GM12878 (cell line): ENCODE measurements at regions of chr2 and their contacts with region 1.

Region 1: GRCh38 chr2:45993476-45993991 is 303.7 kb upstream of the EPAS1 start:
- DNase-seq: peak; percentile 23
- ATAC-seq: peak; percentile 90
- H3K4me3 ChIP-seq: no peak overlapping the region
- H3K27ac ChIP-seq: no peak overlapping the region
- H3K4me1 ChIP-seq: no peaks in the 10 kb centered on the region
- H3K27me3 ChIP-seq: no peaks in the 10 kb centered on the region
- CTCF ChIP-seq: peak; percentile 72 to 79 (median 79)
- EP300 ChIP-seq: no peak
- POLR2A ChIP-seq: no peak
- RAD21 ChIP-seq: peak; percentile 81

Region 2: DNA sequence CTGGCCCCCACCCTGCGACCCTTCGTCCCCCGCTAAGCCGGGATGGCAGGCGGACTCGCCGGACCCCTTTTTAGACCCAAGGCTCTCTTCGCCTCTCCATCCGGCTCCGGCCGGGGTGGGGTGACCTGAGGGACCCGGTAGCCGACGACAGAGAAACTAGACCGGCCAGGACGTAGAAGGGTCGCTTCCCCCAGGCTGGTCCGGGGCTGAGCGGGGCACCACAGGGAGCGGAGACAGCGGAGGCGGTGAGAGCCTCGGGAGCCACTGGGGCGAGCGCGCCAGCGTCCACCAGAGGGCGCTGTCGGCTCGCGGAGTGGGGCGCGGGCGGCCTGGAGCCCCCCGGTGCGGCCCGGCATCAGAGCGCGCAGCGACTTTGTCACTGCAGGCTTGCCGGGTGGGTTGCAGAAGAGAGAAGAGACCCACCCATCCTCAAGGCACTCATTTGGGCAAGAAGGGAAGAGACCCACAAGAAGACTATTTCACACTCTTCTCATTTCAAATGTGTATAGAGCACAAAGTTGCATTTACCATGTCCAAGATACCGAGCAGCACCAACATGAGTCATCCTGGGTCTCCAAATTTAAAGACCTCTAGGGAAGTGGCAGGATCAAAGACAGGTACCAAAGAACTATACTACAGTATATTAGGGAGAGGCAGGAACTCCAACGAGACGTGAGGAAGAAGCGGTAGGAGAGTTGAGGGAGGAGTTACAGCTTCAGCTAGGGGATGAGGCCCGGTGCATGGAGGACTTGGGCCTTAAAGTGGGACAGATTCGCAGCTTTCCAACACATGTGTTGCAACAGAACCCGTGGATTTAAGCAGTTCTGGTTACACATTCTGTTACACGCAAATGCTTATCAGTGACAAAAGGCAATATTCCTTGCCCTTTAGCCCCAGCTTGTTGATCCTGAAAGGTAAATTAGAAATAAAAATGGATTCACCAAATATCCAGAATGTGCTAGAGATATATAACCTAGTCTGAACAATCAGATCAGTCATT is 349.7 kb before region 1 on chr2:
- CTCF ChIA-PET with region 1: interaction called, 8 read pairs
- POLR2A ChIA-PET with region 1: no interaction called
- RAD21 ChIA-PET with region 1: no interaction called
- SMC1A ChIA-PET with region 1: interaction called, 3 read pairs
- in situ Hi-C with region 1: no loop called
- intact Hi-C with region 1: loop called (anchors 5 kb)
- DNase-seq: no peak
- ATAC-seq: peak; percentile 99
- H3K4me3 ChIP-seq: peak overlapping the region; percentile 69; the same call in 1 of the 2 replicates
- H3K27ac ChIP-seq: no peak overlapping the region
- H3K4me1 ChIP-seq: no peaks in the 10 kb centered on the region
- H3K27me3 ChIP-seq: no peaks in the 10 kb centered on the region; a peak in 1 of 4 replicates
- CTCF ChIP-seq: peak; percentile 80 to 84 (median 81)
- EP300 ChIP-seq: no peak
- POLR2A ChIP-seq: no peak
- RAD21 ChIP-seq: peak; percentile 93

Region 3: GRCh38 chr2:46461011-46461674 is 467.6 kb after region 1 on chr2:
- CTCF ChIA-PET with region 1: interaction called, 34 read pairs
- POLR2A ChIA-PET with region 1: no interaction called
- RAD21 ChIA-PET with region 1: interaction called, 10 read pairs
- SMC1A ChIA-PET with region 1: interaction called, 25 read pairs
- in situ Hi-C with region 1: no loop called
- intact Hi-C with region 1: loop called (anchors 1 kb)
- DNase-seq: peak; percentile 39
- ATAC-seq: peak; percentile 85
- H3K4me3 ChIP-seq: no peak overlapping the region; the same call in 1 of the 2 replicates
- H3K27ac ChIP-seq: 0 out of 2 replicates have a peak overlapping the region, but pooled peaks have one; percentile 0
- H3K4me1 ChIP-seq: peaks cover 18% of the 10 kb centered on the region
- H3K27me3 ChIP-seq: no peaks in the 10 kb centered on the region; a peak in 1 of 4 replicates
- CTCF ChIP-seq: peak; percentile 97 to 99 (median 99); a peak in 5 of 6 replicates
- EP300 ChIP-seq: no peak
- POLR2A ChIP-seq: no peak
- RAD21 ChIP-seq: peak; percentile 96

Region 4: DNA sequence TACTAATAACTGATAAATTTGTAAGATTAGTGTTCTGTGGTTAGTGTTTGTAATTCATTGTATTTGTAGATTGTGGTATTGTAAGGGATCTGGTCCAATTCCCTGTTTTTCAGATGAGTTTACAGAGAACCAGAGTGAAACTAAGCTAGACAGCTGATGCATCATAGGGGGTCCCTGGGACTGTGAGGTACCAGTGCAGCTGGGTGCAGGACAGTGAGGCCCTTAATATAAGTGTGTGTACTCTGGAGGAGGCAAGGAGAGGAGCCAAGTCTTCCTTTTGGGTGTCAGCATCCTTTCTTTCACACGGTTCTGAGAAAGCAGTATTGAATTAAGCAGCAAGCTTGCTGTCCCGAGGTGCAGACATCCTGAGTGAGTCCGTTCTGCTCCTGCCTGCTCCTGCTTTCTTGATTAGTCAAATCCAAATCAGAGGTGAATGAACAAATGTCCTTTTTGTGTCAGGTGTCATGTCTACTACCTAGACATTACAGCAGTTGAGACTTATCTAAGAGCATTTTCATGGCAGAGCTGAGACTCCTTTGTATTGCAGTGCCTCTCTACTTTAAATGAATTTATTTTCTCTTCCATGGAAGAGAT is 727.2 kb after region 1 on chr2:
- CTCF ChIA-PET with region 1: no interaction called
- POLR2A ChIA-PET with region 1: no interaction called
- RAD21 ChIA-PET with region 1: no interaction called
- SMC1A ChIA-PET with region 1: no interaction called
- in situ Hi-C with region 1: no loop called
- intact Hi-C with region 1: no loop called
- DNase-seq: no peak
- ATAC-seq: peak; percentile 66
- H3K4me3 ChIP-seq: no peak overlapping the region
- H3K27ac ChIP-seq: no peak overlapping the region
- H3K4me1 ChIP-seq: peaks cover 8% of the 10 kb centered on the region
- H3K27me3 ChIP-seq: no peaks in the 10 kb centered on the region
- CTCF ChIP-seq: no peak
- EP300 ChIP-seq: no peak
- POLR2A ChIP-seq: no peak
- RAD21 ChIP-seq: no peak